ENCODE measurements at regions of chr10 and their contacts with region 1.

Region 1: DNA sequence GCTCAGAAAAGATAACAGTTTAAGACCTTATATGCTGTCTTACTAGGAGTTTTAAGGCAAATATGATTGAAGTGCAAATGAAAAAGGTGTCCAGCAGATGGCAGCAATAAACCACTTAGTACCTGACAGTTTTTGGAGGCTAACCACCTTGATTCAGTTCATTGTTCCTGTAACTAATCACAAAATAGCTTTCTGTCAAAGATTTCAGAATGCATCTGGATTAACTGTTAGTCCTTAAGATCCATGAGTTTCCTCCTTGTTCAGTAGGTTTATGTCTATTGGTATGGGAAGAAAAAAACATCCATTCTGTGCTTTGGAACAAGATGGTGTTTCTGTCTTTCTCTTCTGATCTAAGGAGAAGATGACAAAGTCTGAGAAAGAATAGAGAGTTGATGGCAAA is 46.6 kb downstream of the CCSER2 start:
- DNase-seq: no peak
- ATAC-seq: peak; percentile 56

Region 2: GRCh38 chr10:84264611-84265141 is 110.3 kb before region 1 on chr10:
- intact Hi-C with region 1: loop called (anchors 10 kb)
- DNase-seq: peak; percentile 81
- ATAC-seq: peak; percentile 96

Region 3: GRCh38 chr10:84762754-84763394 is 387.9 kb after region 1 on chr10:
- intact Hi-C with region 1: no loop called
- DNase-seq: no peak
- ATAC-seq: no peak